B cell (primary cell): ENCODE measurements at regions of chr1 and their contacts with region 1.

Region 1: GRCh38 chr1:23743287-23744052 is at the start of gene ELOA:
- DNase-seq: peak; percentile 84
- ATAC-seq: peak; percentile 91
- H3K4me3 ChIP-seq: peak within 1 kb of the TSS; percentile 72 to 92 (median 86)
- H3K4me3 Mint-ChIP-seq: peak within 1 kb of the TSS; percentile 93
- H3K27ac ChIP-seq: peak within 1 kb of the TSS; percentile 68 to 88
- H3K27ac Mint-ChIP-seq: peak within 1 kb of the TSS; percentile 94
- H3K4me1 ChIP-seq: peaks cover 22 to 36% of the 10 kb centered on the region in 2 donors
- H3K4me1 Mint-ChIP-seq: peaks cover 50% of the 10 kb centered on the region
- H3K27me3 ChIP-seq: no peaks in the 10 kb centered on the region
- H3K27me3 Mint-ChIP-seq: no peaks in the 10 kb centered on the region
- CTCF ChIP-seq: no peak
- total RNA-seq, gene ELOA: 53.0 and 56.6 TPM in 2 replicates

Region 2: DNA sequence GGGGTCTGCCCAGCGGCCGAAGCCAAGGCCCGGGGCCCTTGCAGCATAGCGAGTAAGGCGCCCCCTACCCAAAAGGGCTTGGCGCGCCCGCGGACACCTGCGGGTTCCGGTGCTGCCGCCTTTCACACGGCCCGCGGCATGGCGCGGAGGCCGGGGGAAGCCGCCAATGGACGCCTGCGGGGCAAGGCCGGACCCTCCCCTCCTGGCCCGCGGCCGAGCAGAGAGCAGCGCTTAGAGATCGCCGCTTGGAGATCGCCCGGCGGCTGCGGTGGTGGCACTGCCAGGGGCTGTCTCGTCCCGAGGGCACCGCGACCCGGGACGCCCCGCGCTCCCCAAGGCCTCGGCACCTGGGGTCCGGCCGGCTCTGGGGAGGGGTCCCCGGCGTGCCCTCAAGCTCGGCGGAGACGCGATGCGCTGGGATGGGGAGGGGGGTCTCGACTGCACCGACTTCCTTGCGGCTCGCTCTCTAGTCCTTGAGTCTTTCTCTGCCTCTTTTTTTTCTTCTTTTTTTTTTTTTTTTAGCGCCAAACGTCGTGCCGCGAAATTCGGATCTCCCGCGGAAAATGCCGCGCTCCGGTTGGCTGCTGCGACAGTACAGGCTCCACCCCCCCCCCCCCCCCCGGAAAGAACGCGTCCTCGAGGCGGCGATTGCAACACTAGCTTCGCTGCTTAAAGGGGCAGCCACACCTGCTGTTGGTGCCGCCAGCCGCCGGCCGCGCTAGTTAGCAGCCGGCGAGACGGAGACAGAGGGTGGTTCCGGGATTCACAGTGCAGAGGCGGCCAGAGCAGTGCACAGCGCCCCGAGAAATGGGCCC is 212.5 kb before region 1 on chr1 and contains the start of gene E2F2:
- CTCF ChIA-PET with region 1: no interaction called
- POLR2A ChIA-PET with region 1: no interaction called
- intact Hi-C with region 1: loop called (anchors 1 kb)
- DNase-seq: peak; percentile 91
- ATAC-seq: peak; percentile 83
- H3K4me3 ChIP-seq: peak within 1 kb of the TSS; percentile 40 to 71 (median 63)
- H3K4me3 Mint-ChIP-seq: peak within 1 kb of the TSS; percentile 85
- H3K27ac ChIP-seq: no peak within 1 kb of the TSS
- H3K27ac Mint-ChIP-seq: peak within 1 kb of the TSS; percentile 61
- H3K4me1 ChIP-seq: peaks cover 69 to 75% of the 10 kb centered on the region in 2 donors
- H3K4me1 Mint-ChIP-seq: peaks cover 79% of the 10 kb centered on the region
- H3K27me3 ChIP-seq: peaks cover 0 to 7% (median 0%) of the 10 kb centered on the region in 4 experiments
- H3K27me3 Mint-ChIP-seq: no peaks in the 10 kb centered on the region
- CTCF ChIP-seq: no peak
- total RNA-seq, gene E2F2: 1.2 and 3.2 TPM in 2 replicates

Region 3: GRCh38 chr1:23619299-23620188 is 123.9 kb before region 1 on chr1:
- CTCF ChIA-PET with region 1: no interaction called
- POLR2A ChIA-PET with region 1: interaction called, 11 read pairs
- intact Hi-C with region 1: no loop called
- DNase-seq: peak; percentile 89
- ATAC-seq: peak; percentile 88
- H3K4me3 ChIP-seq: peak overlapping the region in 4 of 5 experiments; percentile 29 to 59 (median 50)
- H3K4me3 Mint-ChIP-seq: peak overlapping the region; percentile 82
- H3K27ac ChIP-seq: peak overlapping the region; percentile 93 to 94
- H3K27ac Mint-ChIP-seq: peak overlapping the region; percentile 98
- H3K4me1 ChIP-seq: peaks cover 77 to 93% of the 10 kb centered on the region in 2 donors
- H3K4me1 Mint-ChIP-seq: peaks cover 87% of the 10 kb centered on the region
- H3K27me3 ChIP-seq: no peaks in the 10 kb centered on the region
- H3K27me3 Mint-ChIP-seq: no peaks in the 10 kb centered on the region
- CTCF ChIP-seq: no peak

Region 4: GRCh38 chr1:23691499-23692307 is 51.8 kb before region 1 on chr1 and contains the start of gene RPL11:
- CTCF ChIA-PET with region 1: interaction called, 112 read pairs
- POLR2A ChIA-PET with region 1: interaction called, 20 read pairs
- intact Hi-C with region 1: loop called (anchors 1 kb)
- DNase-seq: peak; percentile 92
- ATAC-seq: peak; percentile 100
- H3K4me3 ChIP-seq: peak within 1 kb of the TSS; percentile 76 to 99 (median 77)
- H3K4me3 Mint-ChIP-seq: peak within 1 kb of the TSS; percentile 97
- H3K27ac ChIP-seq: peak within 1 kb of the TSS; percentile 79 to 84
- H3K27ac Mint-ChIP-seq: peak within 1 kb of the TSS; percentile 94
- H3K4me1 ChIP-seq: peaks cover 16 to 22% of the 10 kb centered on the region in 2 donors
- H3K4me1 Mint-ChIP-seq: peaks cover 48% of the 10 kb centered on the region
- H3K27me3 ChIP-seq: no peaks in the 10 kb centered on the region
- H3K27me3 Mint-ChIP-seq: no peaks in the 10 kb centered on the region
- CTCF ChIP-seq: peak; percentile 79
- total RNA-seq, gene RPL11: 1,439 and 1,539 TPM in 2 replicates

Region 5: DNA sequence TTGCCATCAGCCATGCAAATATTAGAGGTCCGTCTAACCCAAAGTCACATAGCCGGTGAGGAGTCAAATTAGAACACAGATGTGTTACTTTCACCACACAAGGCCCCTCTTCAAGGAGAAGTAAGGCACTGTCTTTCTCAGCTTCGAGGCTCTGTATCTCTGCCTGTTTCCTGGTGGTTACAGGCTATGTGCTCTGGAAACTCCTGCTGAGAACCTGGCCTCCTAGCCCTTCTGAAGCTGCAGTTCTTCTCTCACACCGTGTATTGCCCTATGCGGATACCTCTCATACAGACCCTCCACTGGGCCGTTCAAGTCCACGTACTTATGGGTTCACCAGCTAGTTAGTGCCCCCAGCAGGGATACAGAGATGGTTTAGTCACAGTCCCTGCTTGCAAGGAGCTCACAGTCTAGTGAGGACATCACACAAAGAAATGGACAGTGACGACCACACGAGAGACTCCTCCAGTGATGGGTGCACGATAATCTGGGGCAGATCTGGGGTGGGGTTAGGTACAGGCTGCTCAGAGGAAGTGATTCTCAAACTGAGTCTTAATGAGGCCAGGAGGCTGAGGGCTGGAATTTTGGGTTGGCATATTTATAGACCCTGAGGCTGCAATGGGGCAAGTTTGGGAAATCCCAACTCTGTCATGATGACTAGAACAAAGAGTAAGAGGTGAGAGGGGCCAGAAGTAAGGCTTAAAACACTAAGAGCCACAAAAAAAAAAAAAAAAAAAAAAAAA is 23.0 kb before region 1 on chr1:
- CTCF ChIA-PET with region 1: interaction called, 26 read pairs
- POLR2A ChIA-PET with region 1: interaction called, 17 read pairs
- intact Hi-C with region 1: loop called (anchors 1 kb)
- DNase-seq: peak; percentile 50
- ATAC-seq: peak; percentile 51
- H3K4me3 ChIP-seq: no peak overlapping the region
- H3K4me3 Mint-ChIP-seq: peak overlapping the region; percentile 53
- H3K27ac ChIP-seq: peak overlapping the region; percentile 60 to 74
- H3K27ac Mint-ChIP-seq: peak overlapping the region; percentile 81
- H3K4me1 ChIP-seq: peaks cover 32 to 37% of the 10 kb centered on the region in 2 donors
- H3K4me1 Mint-ChIP-seq: peaks cover 49% of the 10 kb centered on the region
- H3K27me3 ChIP-seq: no peaks in the 10 kb centered on the region
- H3K27me3 Mint-ChIP-seq: no peaks in the 10 kb centered on the region
- CTCF ChIP-seq: no peak

Region 6: DNA sequence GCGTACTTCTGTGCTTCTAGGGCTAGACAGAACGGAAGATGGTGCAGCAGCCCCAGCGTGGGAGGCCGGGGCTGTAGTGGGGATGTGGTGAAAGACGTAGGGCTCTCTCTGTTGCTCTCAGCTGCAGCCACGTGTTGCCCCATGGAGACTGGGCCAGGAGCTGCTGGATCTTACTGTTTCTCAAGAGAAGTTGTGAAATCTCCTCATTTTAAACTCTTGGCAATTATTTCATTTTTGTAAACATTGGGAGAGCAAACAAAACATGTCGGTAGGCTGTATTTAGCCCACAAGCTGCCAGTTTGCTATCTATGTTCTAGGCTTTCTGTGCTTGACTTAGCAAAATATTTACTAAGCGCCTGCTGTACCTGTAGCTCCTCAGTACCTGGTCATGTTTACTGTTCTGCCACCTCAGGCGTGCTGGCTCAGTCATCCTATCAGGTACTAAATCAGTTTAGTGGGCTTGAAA is 16.1 kb before region 1 on chr1:
- CTCF ChIA-PET with region 1: interaction called, 26 read pairs
- POLR2A ChIA-PET with region 1: interaction called, 17 read pairs
- intact Hi-C with region 1: loop called (anchors 1 kb)
- DNase-seq: no peak
- ATAC-seq: no peak
- H3K4me3 ChIP-seq: peak overlapping the region in 1 of 5 experiments; percentile 0
- H3K4me3 Mint-ChIP-seq: peak overlapping the region; percentile 70
- H3K27ac ChIP-seq: peak overlapping the region; percentile 82 to 87
- H3K27ac Mint-ChIP-seq: peak overlapping the region; percentile 95
- H3K4me1 ChIP-seq: peaks cover 50 to 66% of the 10 kb centered on the region in 2 donors
- H3K4me1 Mint-ChIP-seq: peaks cover 56% of the 10 kb centered on the region
- H3K27me3 ChIP-seq: no peaks in the 10 kb centered on the region
- H3K27me3 Mint-ChIP-seq: no peaks in the 10 kb centered on the region
- CTCF ChIP-seq: no peak